ENCODE measurements at regions of chr12 and their contacts with region 1.

Region 1: GRCh38 chr12:106223485-106224354 is 24.1 kb downstream of the CKAP4 start:
- DNase-seq: peak; percentile 67
- ATAC-seq: peak; percentile 79

Region 2: GRCh38 chr12:105409801-105410471 is 813.8 kb before region 1 on chr12:
- intact Hi-C with region 1: loop called (anchors 10 kb)
- DNase-seq: peak; percentile 56
- ATAC-seq: peak; percentile 80

Region 3: DNA sequence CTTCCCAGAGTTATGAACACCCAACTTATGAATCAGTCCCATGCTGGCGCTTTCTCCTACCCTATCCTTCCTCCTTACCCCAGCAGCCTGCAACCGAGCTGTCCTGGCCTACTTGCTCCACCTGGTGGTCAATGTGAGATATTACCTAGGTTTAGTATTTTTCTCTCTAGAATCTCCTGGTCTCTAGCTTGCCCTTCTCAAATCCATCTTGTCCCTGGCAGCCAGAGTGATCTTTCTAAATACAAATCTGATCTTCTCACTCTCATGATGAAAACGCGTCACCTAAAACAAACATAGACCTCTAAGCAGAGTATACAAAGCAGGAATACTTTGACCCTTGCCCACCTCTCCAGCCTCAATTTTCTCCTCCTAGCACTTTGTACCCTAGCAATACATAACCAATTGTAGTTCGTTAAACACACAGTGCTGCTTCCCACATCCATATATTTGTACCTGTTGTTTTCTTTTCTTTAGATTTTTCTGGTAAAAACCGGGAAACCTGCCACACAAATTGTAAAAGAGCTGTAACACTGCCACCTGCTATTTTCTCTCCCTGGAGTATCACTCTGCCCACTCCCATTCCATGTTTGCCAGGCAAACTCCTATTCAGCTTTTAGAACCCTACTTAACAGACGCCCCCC is 58.9 kb after region 1 on chr12:
- intact Hi-C with region 1: loop called (anchors 5 kb)
- DNase-seq: peak; percentile 41
- ATAC-seq: peak; percentile 64

Region 4: DNA sequence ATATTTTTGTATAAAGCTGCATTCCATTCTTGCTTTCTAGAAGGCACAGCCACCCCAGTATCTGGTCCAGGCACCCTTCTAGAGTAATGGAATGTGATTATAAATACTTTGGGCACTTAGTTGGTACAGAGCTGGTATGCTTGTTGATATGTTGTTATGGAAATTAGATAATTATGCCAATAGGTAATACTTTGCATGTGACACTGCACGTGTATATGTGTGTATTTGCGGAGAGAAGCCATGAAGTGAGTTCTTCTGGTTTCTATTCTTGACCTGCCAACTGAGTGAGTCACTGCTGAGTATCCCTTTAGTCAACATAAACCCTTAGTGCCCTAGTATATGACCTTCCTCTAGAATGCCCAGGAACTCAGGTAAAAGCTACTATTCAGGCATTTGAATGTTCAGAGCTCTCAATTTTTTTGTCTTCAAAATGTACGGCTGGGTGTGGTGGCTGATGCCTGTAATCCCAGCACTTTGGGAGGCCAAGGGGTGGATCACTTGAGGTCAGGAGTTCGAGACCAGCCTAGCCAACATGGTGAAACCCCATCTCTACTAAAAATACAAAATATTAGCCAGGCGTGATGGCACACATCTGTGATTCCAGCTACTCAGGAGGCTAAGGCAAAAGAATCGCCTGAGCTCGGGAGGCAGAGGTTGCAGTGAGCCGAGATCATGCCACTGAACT is 72.6 kb after region 1 on chr12:
- intact Hi-C with region 1: no loop called
- DNase-seq: no peak
- ATAC-seq: peak; percentile 91